Posterior vena cava (tissue), 2 donors: ENCODE measurements at regions of chr1 and their contacts with region 1.

Region 1: DNA sequence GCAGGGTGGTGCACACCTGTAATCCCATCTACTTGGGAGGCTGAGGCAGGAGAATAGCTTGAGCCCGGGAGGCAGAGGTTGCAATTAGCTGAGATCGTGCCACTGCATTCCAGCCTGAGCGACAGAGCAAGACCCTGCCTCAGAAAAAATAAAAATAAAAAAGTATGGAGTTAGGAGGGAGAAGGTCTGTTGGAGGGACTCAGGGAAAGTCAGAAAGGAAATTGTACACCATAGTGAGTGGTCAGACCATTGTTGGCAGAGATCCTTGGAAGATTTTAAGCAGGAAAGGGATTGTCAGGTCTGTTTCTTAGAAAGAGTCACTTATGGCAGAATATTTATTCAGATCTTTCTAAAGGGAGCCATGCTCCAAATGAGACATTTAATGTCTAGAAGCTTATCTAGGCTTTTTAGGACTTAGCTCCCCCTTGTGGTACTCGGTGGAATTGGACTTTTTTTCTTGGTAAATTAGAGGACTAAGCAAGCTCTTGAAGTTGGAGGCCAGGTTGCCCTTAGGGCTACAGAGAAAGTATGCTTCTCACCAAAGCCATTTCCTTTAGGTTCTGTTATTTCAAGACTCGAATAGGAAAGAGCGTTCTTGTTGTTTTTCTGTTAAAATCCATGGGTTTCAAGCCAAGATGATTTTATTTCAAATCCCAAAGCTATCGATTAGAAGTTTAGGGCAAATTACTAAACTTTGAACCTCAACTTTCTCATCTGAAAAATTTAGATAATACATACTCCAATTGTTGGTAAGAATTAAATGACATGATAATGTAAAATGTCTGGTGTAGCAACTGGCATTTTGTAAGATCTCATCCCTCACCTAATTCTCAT is 16.5 kb downstream of the MIA3 start:
- DNase-seq: no peak

Region 2: GRCh38 chr1:222464841-222465210 is 169.6 kb before region 1 on chr1:
- intact Hi-C with region 1: loop called (anchors 2 to 5 kb)
- DNase-seq: peak; percentile 85

Region 3: GRCh38 chr1:222589462-222590302 is 44.7 kb before region 1 on chr1 and contains the start of gene TAF1A:
- intact Hi-C with region 1: loop called in 1 of 2 experiments (anchors 10 kb)
- DNase-seq: peak; percentile 96
- total RNA-seq, gene TAF1A: 6.1 to 9.0 TPM